HAP-1 (cell line): ENCODE measurements at regions of chr1 and their contacts with region 1.

Region 1: DNA sequence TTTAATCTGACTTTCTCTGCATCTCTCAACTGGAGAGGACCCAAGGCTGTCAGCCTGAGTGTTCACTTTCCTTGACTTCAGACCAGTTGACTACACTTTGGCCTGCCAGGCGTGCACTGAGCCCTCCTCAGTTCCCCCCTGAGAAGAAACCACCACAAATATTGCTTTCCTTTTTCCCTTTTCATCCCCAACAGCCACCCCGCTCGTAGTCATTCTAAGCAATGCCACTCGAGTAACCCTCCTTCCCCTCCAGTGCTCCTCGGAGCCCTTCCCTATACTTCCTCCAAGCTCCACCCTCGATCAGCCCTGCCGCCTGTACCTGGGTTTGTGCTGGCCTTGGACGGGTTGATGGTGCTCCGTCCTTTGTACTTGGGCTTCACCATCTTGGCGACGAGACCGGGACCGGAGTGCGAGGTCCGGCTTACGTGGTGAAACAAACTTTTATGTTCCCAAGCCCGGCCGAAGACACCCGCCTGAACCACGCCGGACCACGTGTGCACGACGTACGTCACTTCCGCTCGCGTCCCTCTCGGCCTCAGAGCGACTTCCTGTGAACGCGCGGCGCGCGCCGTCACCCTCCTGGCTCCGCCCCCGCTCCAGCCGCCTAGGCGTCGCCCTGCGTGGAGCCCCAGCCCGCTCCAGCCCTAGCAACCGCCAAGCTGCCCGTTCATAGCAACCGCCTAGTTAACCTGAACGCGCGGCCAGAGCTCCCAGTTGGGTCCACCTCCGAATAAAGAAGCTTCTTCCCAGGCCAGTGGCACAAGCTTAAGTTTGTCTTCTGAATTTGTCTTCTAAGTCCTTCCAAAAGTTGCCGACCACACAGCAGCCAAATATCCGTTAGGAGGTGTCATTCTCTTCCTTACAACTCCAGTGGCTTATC is at the start of gene GNL2:
- DNase-seq: peak; percentile 91 to 97
- H3K4me3 ChIP-seq: peak within 1 kb of the TSS; percentile 87
- H3K4me1 ChIP-seq: peaks cover 5% of the 10 kb centered on the region
- H3K27me3 ChIP-seq: peaks cover 9% of the 10 kb centered on the region

Region 2: GRCh38 chr1:37682334-37682987 is 86.8 kb after region 1 on chr1:
- in situ Hi-C with region 1: loop called (anchors 5 kb)
- DNase-seq: peak; percentile 41 to 81
- H3K4me3 ChIP-seq: no peak overlapping the region
- H3K4me1 ChIP-seq: no peaks in the 10 kb centered on the region
- H3K27me3 ChIP-seq: no peaks in the 10 kb centered on the region

Region 3: DNA sequence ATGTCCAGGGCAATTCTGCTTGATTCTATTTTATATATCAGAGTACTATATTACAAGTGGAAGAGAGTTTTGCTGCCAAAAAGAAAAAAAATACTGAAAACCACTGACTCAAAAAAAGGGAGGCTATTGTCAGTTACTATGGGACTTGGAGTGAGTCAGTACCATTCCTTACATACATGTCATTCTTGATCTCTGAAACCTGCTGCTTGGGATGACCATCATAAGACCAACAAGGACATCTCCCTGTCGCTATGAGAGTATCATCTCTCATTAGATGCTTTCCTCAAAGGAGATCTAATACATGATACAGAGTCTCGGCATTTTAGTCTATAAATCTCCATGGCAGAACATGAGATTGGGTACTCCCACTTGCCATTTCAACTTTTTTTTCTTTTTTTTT is 363.0 kb after region 1 on chr1:
- in situ Hi-C with region 1: loop called (anchors 25 kb)
- DNase-seq: no peak
- H3K4me3 ChIP-seq: no peak overlapping the region
- H3K4me1 ChIP-seq: no peaks in the 10 kb centered on the region
- H3K27me3 ChIP-seq: no peaks in the 10 kb centered on the region